Sciatic nerve (tissue), 2 donors: ENCODE measurements at regions of chr4 and their contacts with region 1.

Region 1: DNA sequence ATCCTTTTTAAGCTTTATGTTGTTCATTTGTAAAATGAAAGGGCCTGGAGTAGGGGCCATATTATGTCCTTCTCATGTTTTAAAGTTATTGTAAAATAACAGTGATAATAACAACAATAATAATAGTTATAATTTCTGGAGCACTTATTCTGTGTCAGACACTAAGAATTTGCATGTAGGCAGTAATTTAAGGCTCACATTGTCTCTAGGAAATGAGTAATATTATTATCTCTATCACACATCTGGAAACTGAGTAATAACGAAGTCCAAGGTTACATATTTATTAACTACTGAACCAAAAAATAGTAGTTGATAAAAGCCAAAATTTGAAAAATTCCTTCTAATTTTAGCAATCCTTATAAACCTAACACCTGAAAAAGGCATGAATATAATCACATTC is 520.7 kb upstream of the PABPC4L start:
- DNase-seq: no peak
- ATAC-seq: no peak

Region 2: GRCh38 chr4:134687646-134688628 is 34.4 kb before region 1 on chr4:
- intact Hi-C with region 1: loop called (anchors 1 kb)
- DNase-seq: no peak
- ATAC-seq: peak; percentile 10